Activated CD4-positive, alpha-beta T cell treated with anti-CD3 and anti-CD28 coated beads for 36 hours (primary cell): ENCODE measurements at regions of chr4 and their contacts with region 1.

Region 1: DNA sequence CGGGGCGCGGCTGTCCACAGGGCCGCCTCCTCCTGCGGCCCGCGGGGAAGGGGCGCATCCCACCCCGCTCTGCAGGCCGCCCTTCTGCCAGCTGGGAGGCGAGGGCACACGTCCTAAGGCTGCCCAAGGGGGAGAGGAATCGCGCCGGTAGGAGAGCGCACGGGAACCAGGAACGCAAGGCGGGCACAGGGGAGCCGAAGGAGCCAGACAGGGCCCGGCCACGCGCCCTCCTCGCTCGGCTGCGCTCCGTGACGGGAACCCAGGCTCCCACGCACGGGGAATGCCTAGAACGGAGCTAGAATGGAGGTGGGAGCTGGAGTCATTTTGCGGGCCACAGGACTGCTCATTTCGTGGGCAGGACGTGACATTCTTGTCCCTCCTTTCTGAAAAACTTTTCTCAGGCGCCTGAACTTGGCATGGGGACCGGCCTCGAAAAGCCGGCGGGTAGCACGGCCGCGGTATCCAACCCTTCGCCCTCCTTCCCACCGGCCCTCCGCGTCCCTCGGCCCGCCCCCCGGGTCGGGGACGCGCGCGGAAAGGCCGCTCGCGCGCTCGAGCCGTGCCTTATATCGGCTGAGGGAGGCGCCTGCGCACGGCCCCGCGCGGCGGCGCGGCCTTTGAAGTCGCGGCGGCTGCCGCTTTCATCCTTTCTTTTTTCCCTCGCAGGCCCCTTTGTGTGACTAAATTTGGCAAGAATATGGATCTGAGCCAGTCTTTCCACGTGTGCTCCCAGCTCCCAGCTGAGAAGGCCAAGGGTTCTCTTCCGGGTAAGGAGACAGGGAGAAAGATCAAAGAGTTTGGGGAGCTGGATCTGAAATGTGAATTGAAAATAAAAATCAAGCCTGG is 4.2 kb upstream of the LEF1 start:
- DNase-seq: peak; percentile 84
- ATAC-seq: peak; percentile 42
- H3K4me3 Mint-ChIP-seq: peak overlapping the region; percentile 85
- H3K27ac Mint-ChIP-seq: peak overlapping the region; percentile 95
- H3K4me1 Mint-ChIP-seq: peaks cover 53% of the 10 kb centered on the region
- H3K27me3 Mint-ChIP-seq: peaks cover 12% of the 10 kb centered on the region

Region 2: DNA sequence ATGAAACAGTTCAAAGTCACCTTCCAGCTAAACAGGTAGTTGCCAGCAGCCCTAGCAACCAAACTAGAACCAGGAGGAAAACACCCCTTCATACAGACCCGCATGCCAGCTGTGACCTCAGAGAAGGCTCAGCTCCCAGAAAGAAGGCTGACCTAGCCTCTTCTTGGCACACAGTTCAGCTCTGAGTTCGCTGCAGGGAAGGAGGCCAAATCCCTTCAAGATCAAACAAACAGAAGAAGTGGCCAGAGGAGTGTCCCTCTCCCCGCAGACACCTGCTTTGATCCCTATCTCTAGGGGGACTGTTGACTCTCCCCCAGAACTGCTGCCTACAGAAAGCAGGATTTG is 127.3 kb before region 1 on chr4:
- CTCF ChIA-PET with region 1: interaction called, 5 read pairs
- POLR2A ChIA-PET with region 1: interaction called, 3 read pairs
- intact Hi-C with region 1: loop called in 1 of 2 experiments (anchors 5 kb)
- DNase-seq: peak; percentile 62
- ATAC-seq: no peak
- H3K4me3 Mint-ChIP-seq: no peak overlapping the region
- H3K27ac Mint-ChIP-seq: peak overlapping the region; percentile 88
- H3K4me1 Mint-ChIP-seq: peaks cover 66% of the 10 kb centered on the region
- H3K27me3 Mint-ChIP-seq: no peaks in the 10 kb centered on the region

Region 3: DNA sequence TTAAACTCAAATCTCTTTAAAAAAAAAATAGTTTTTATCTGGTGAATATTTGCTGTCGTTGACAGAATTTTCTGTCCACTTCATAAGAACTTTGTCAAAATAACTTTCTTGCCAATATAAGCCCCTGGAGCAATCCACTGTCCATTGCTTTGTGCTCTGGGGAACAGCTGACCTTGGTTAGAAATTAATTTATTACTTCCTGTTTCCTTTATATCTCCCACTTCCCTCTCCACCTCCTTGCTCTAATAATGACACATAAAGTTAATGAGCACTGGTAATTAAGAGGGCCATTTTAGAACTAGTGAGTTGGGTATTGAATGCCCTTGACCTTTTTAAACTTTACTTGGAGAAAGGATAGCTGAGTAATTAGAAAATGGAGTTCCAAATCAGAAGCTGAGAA is 147.1 kb after region 1 on chr4:
- CTCF ChIA-PET with region 1: no interaction called
- POLR2A ChIA-PET with region 1: no interaction called
- intact Hi-C with region 1: no loop called
- DNase-seq: no peak
- ATAC-seq: no peak
- H3K4me3 Mint-ChIP-seq: no peak overlapping the region
- H3K27ac Mint-ChIP-seq: no peak overlapping the region
- H3K4me1 Mint-ChIP-seq: peaks cover 8% of the 10 kb centered on the region
- H3K27me3 Mint-ChIP-seq: peaks cover 2% of the 10 kb centered on the region

Region 4: GRCh38 chr4:108355186-108355901 is 182.4 kb after region 1 on chr4:
- CTCF ChIA-PET with region 1: no interaction called
- POLR2A ChIA-PET with region 1: no interaction called
- intact Hi-C with region 1: loop called (anchors 2 to 5 kb)
- DNase-seq: peak; percentile 42
- ATAC-seq: peak; percentile 82
- H3K4me3 Mint-ChIP-seq: peak overlapping the region; percentile 10
- H3K27ac Mint-ChIP-seq: peak overlapping the region; percentile 79
- H3K4me1 Mint-ChIP-seq: peaks cover 53% of the 10 kb centered on the region
- H3K27me3 Mint-ChIP-seq: no peaks in the 10 kb centered on the region

Region 5: DNA sequence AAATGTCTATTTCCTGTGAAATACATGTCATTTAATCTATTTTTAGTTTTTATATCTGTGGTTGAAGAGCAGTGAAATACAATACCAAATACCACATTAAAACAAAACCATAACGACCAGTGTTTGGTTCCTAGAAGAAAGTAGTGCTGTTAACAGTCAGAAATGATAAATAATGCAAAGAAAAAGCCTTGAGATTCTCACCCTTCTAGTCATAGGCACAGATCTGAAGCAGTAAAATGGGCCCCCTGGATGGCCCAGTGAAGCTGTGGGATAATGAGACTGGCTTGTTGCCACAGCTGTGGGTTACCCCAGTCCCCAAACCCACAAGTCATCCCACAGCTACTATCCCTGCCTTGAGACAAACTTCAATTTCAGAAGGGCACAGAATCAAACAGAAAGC is 310.1 kb after region 1 on chr4:
- CTCF ChIA-PET with region 1: no interaction called
- POLR2A ChIA-PET with region 1: no interaction called
- intact Hi-C with region 1: loop called (anchors 5 kb)
- DNase-seq: peak; percentile 58
- ATAC-seq: peak; percentile 68
- H3K4me3 Mint-ChIP-seq: no peak overlapping the region
- H3K27ac Mint-ChIP-seq: no peak overlapping the region
- H3K4me1 Mint-ChIP-seq: peaks cover 34% of the 10 kb centered on the region
- H3K27me3 Mint-ChIP-seq: no peaks in the 10 kb centered on the region

Region 6: DNA sequence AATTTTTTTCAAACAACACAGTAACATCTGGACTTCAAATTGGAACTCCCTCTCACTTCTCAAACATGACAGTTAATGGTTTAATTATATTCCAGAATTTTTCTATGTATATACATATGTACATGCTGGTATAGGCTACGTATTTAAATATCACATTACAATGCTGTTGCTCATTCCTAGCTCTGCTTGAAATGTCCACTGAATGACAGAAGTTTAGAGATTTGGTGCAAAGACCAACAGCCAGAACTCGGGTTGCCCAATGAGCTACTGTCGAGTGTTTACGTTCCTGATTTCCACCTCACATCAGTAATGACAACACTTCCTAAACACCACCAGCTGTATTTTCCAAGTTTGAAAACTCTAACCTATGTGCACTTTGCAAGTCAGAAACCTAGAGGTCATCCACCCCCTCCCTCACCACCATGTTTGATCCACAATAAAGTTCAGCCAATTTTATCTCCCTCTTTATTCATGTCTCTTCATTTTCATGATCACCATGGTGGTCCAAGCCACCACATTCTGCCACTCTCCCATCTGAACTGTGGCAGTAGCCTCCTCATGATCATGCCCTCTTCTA is 398.1 kb after region 1 on chr4:
- CTCF ChIA-PET with region 1: interaction called, 5 read pairs
- POLR2A ChIA-PET with region 1: no interaction called
- intact Hi-C with region 1: loop called (anchors 5 kb)
- DNase-seq: no peak
- ATAC-seq: no peak
- H3K4me3 Mint-ChIP-seq: no peak overlapping the region
- H3K27ac Mint-ChIP-seq: no peak overlapping the region
- H3K4me1 Mint-ChIP-seq: peaks cover 23% of the 10 kb centered on the region
- H3K27me3 Mint-ChIP-seq: no peaks in the 10 kb centered on the region

Region 7: GRCh38 chr4:108644237-108644636 is 471.3 kb after region 1 on chr4:
- CTCF ChIA-PET with region 1: no interaction called
- POLR2A ChIA-PET with region 1: no interaction called
- intact Hi-C with region 1: no loop called
- DNase-seq: no peak
- ATAC-seq: no peak
- H3K4me3 Mint-ChIP-seq: no peak overlapping the region
- H3K27ac Mint-ChIP-seq: no peak overlapping the region
- H3K4me1 Mint-ChIP-seq: peaks cover 6% of the 10 kb centered on the region
- H3K27me3 Mint-ChIP-seq: no peaks in the 10 kb centered on the region